ENCODE measurements at regions of chr15 and their contacts with region 1.

Region 1: DNA sequence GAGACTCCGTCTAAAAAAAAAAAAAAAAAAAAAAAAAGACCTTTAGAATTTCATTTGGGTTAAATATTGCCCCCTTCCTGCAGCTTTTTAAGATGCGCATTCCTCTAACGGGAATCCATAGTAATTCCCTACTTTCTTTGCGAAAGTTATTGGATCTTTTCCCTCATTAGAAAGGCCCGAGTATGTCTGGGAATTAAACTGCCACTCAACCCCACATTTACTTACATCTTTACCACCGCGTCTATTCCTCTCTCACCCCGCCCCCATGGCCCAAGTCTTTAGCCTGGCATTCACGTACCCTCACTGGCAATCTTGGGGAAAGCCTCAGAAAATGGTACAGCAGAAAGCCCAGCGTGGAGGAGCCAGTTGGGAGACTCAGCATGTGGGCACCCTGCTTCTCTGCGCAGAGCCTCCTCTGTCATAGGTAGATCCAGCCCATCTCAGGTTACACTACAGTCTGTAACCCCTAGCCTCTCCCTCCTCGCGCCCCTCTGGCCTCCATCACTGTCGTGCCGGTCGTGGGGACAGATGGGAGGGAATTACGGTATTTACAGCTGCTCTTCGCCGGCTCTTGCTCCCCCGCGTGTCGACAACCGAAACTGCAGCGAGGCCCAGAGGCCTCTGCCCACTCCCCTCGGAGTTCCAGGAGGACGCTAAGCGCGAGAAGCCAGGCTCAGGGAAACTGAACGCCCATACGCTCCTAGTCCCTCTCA is 6.4 kb upstream of the ANKDD1A start:
- DNase-seq: peak; percentile 59 to 86 (median 74)
- H3K4me3 ChIP-seq: peak overlapping the region; percentile 7 to 74 (median 56)
- H3K27ac ChIP-seq: peak overlapping the region in 26 of 59 donors; percentile 13 to 75 (median 44)
- H3K27me3 ChIP-seq: no peaks in the 10 kb centered on the region
- CTCF ChIP-seq: peak; percentile 43 to 94 (median 88)

Region 2: DNA sequence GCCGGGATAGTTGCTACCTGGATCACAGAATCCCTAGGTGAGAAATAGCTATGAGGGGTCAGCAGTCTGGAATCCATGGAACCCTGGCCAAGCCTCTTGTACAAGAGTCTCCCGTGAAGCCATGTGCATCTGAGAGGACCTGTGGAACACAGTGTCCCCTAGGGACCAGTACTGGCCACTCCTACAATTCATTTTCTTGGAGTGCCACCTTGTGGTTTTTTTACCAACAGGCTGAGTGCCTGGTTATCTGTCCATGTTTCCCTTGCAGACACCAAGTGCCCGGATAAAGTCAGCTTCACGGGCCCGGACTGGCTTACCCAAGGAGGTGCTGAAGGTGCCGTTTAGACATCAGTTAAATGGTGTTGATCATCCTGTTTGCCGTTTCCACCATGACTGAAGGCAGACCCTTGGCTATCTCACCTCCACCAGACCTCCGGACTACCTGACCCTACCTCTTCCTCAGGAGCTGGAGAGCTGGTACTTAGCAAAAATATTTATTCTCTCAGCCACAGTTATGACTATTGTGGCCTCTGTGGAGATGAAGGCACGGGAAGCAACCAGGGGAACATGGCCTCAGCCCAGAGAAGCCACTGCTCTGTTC is 223.8 kb before region 1 on chr15:
- intact Hi-C with region 1: loop called in 1 of 2 experiments (anchors 5 kb)
- DNase-seq: peak in 6 of 10 donors; percentile 26 to 63 (median 49)
- H3K4me3 ChIP-seq: no peak overlapping the region
- H3K27ac ChIP-seq: peak overlapping the region in 24 of 59 donors; percentile 5 to 61 (median 34)
- H3K27me3 ChIP-seq: no peaks in the 10 kb centered on the region
- CTCF ChIP-seq: peak; percentile 65 to 93 (median 86)

Region 3: GRCh38 chr15:64809649-64810496 is 95.4 kb before region 1 on chr15:
- intact Hi-C with region 1: loop called in 1 of 2 experiments (anchors 5 kb)
- DNase-seq: peak; percentile 58 to 83 (median 74)
- H3K4me3 ChIP-seq: no peak overlapping the region
- H3K27ac ChIP-seq: no peak overlapping the region
- H3K27me3 ChIP-seq: peaks cover 0 to 6% (median 0%) of the 10 kb centered on the region in 45 donors
- CTCF ChIP-seq: peak; percentile 59 to 92 (median 84)

Region 4: GRCh38 chr15:64836023-64836536 is 69.2 kb before region 1 on chr15:
- intact Hi-C with region 1: loop called in 1 of 2 experiments (anchors 5 kb)
- DNase-seq: no peak
- H3K4me3 ChIP-seq: peak overlapping the region in 49 of 59 donors; percentile 4 to 54 (median 32)
- H3K27ac ChIP-seq: peak overlapping the region in 45 of 59 donors; percentile 6 to 83 (median 59)
- H3K27me3 ChIP-seq: no peaks in the 10 kb centered on the region
- CTCF ChIP-seq: peak in 7 of 56 donors; percentile 1 to 43 (median 13)

Region 5: GRCh38 chr15:65020419-65020818 is 115.1 kb after region 1 on chr15:
- intact Hi-C with region 1: no loop called
- DNase-seq: no peak
- H3K4me3 ChIP-seq: no peak overlapping the region
- H3K27ac ChIP-seq: no peak overlapping the region
- H3K27me3 ChIP-seq: no peaks in the 10 kb centered on the region
- CTCF ChIP-seq: no peak

Region 6: DNA sequence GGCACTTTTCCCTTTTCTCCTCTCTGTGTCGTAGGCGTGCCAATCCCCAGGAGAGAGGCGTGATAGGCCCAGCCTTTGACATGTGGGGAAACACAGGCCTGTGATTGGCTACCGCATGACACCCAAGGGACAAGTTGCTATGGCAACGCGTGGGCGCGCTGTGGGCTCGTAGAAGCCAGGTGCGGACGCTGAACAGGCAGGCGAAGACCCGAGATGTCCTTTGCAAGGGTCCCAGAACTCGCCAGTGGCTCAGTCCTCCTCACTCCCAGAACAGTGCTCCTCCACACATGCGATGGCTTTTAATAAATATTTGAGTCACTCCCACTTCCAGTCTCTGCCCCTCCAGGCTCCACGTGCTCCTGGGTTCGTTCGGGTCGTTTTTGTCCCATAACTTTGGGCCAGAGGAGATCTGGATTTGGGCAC is 144.2 kb after region 1 on chr15:
- intact Hi-C with region 1: no loop called
- DNase-seq: peak; percentile 83 to 98 (median 96)
- H3K4me3 ChIP-seq: peak overlapping the region; percentile 15 to 70 (median 53)
- H3K27ac ChIP-seq: no peak overlapping the region
- H3K27me3 ChIP-seq: no peaks in the 10 kb centered on the region
- CTCF ChIP-seq: peak in 8 of 56 donors; percentile 6 to 29 (median 18)

Region 7: DNA sequence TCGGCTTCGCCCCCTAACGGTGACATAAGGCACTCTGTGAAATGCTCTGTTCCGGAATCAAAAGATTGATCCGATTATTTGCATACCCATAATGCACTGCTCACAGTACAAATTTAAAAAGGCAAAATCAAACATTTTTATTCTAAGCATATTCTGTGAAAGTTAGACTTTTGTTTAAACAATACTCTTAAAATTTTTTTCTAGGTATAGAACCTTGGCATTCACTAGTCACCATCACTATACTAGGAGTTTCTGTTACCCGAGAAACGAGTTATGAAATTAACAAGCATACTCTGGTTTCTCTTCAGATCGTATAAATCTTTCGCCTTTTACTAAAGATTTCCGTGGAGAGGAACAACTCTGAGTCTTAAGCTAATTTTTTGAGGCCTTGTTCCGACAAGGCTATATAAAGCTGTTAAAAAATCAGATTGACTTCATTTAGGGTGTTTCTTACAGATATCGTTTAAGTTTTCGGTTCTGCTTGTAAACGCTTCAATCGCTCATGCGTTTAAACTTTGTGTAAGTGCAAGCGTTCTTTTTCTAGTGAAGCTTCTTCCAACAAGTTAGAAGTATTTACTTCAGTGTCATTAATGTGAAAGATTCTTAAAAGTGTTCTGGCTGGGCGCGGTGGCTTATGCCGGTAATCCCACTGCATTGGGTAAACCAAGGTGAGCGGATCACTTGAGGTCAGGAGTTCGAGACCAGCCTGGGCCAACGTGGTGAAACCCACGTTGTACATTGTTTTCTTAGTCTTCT is 399.3 kb after region 1 on chr15 and contains the start of gene RNU5B-1:
- intact Hi-C with region 1: no loop called
- DNase-seq: peak; percentile 29 to 83 (median 73)
- H3K4me3 ChIP-seq: peak within 1 kb of the TSS; percentile 41 to 82 (median 66)
- H3K27ac ChIP-seq: peak within 1 kb of the TSS; percentile 65 to 99 (median 95)
- H3K27me3 ChIP-seq: no peaks in the 10 kb centered on the region
- CTCF ChIP-seq: peak; percentile 7 to 95 (median 85)
- total RNA-seq, gene RNU5B-1: 23.0 to 207 (median 47.4) TPM in 74 of 120 experiments, not detected in the others

Measured in dorsolateral prefrontal cortex (tissue), 120 donors.